Endothelial cell of umbilical vein (primary cell): ENCODE measurements at regions of chr16 and their contacts with region 1.

Region 1: DNA sequence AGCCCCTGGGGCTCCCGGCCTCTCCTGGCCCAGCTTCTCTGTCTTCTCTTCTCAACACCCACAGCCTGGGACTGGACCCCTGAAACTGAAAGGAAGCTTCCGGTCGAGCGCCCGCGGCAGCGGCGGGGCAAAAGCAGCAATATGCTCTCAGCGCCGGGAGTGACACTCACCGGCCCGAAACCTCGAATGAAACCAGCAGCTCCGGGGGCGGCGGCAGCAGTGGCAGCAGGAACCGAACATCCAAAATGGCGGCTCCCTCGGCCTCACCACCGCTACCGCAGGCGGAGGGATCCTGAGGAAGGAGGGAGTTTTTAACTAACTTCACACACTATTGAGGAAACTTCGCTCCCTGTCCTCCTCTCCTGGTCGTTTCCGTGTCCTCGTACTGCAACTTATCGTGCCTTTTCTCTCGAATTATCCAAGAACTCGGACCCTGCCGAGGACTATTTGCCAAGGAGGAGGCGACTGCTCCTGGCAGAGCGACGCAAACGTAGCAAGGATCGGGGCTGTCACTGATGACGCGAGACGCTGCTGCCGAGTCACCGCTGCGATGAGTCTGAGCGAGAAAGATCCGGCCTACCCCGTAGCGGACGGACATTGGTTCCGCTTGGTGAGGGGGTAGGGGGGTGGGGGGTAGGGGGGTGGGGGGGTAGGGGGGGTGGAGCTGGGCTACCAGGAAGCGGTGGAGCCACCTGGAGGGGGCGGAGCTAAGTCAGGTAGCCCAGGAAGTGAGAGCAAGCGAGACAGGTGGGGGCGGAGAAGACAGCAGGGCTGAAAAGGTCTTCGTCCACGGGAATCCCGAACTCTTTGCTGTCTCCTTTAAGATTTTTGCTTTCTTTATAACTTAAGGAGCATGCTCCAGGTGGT is at the start of gene AP1G1:
- DNase-seq: peak; percentile 97
- H3K4me3 ChIP-seq: peak within 1 kb of the TSS; percentile 88 to 92 (median 92)
- H3K27ac ChIP-seq: peak within 1 kb of the TSS; percentile 94
- H3K4me1 ChIP-seq: peaks cover 18% of the 10 kb centered on the region
- H3K27me3 ChIP-seq: no peaks in the 10 kb centered on the region
- CTCF ChIP-seq: no peak
- POLR2A ChIP-seq: peak; percentile 87
- total RNA-seq, gene AP1G1: 85.3 and 88.4 TPM in 2 replicates

Region 2: GRCh38 chr16:71489122-71489521 is 319.7 kb before region 1 on chr16 and contains the start of gene ZNF19:
- CTCF ChIA-PET with region 1: no interaction called
- POLR2A ChIA-PET with region 1: no interaction called
- dilution Hi-C with region 1: no loop called
- intact Hi-C with region 1: no loop called
- DNase-seq: no peak
- H3K4me3 ChIP-seq: no peak within 1 kb of the TSS
- H3K27ac ChIP-seq: no peak within 1 kb of the TSS
- H3K4me1 ChIP-seq: peaks cover 4% of the 10 kb centered on the region
- H3K27me3 ChIP-seq: peaks cover 0 to 5% of the 10 kb centered on the region in 2 experiments
- CTCF ChIP-seq: no peak
- POLR2A ChIP-seq: no peak
- total RNA-seq, gene ZNF19: 2.3 and 2.6 TPM in 2 replicates

Region 3: DNA sequence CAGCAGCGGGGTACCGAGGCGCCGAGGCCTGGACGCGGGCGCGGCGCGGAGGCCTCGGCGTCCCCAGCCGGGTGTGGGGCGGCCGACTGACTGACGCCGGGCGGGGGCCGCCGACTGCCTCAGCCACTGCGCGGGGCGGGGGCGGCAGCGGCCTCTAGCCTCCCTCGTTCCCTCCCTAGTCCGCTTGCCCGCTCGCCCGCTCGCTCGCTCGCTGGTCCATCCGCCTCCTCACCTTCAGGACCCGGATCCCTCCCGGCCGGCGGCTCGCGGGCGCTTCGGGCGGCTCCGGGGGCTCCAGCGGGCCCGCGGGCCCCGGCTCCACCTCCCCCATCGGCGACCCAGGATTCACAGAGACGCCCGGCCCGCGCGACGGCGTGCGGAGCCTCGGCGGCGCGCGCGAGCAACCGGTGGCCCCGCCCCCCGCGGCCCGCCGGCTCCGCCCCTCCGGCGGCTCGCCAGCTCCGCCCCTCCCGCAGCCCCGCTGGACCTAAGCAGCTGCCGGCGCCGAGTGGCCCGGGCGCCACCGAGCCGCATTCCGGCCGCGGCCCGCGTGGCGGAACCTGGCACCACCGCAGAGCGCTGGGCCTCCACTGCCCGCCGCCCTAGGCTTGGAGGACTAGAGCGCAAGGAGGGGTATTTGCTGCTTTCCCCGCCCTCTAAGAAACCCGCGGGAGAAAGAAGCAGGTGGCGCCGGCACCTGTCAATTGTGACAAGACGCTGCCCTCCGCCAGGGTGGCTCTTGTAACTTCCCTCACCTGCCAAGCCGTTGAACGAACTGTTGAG is 85.1 kb before region 1 on chr16:
- CTCF ChIA-PET with region 1: no interaction called
- POLR2A ChIA-PET with region 1: no interaction called
- dilution Hi-C with region 1: no loop called
- intact Hi-C with region 1: loop called (anchors 1 kb)
- DNase-seq: peak; percentile 75
- H3K4me3 ChIP-seq: peak overlapping the region; percentile 72 to 87 (median 74)
- H3K27ac ChIP-seq: peak overlapping the region; percentile 70
- H3K4me1 ChIP-seq: peaks cover 13% of the 10 kb centered on the region
- H3K27me3 ChIP-seq: no peaks in the 10 kb centered on the region
- CTCF ChIP-seq: no peak
- POLR2A ChIP-seq: peak; percentile 52

Region 4: GRCh38 chr16:71870818-71871217 is 62.0 kb after region 1 on chr16:
- CTCF ChIA-PET with region 1: no interaction called
- POLR2A ChIA-PET with region 1: no interaction called
- dilution Hi-C with region 1: no loop called
- intact Hi-C with region 1: no loop called
- DNase-seq: no peak
- H3K4me3 ChIP-seq: no peak overlapping the region
- H3K27ac ChIP-seq: no peak overlapping the region
- H3K4me1 ChIP-seq: no peaks in the 10 kb centered on the region
- H3K27me3 ChIP-seq: no peaks in the 10 kb centered on the region
- CTCF ChIP-seq: no peak
- POLR2A ChIP-seq: no peak